Caco-2 (cell line): ENCODE measurements at regions of chr13 and their contacts with region 1.

Region 1: DNA sequence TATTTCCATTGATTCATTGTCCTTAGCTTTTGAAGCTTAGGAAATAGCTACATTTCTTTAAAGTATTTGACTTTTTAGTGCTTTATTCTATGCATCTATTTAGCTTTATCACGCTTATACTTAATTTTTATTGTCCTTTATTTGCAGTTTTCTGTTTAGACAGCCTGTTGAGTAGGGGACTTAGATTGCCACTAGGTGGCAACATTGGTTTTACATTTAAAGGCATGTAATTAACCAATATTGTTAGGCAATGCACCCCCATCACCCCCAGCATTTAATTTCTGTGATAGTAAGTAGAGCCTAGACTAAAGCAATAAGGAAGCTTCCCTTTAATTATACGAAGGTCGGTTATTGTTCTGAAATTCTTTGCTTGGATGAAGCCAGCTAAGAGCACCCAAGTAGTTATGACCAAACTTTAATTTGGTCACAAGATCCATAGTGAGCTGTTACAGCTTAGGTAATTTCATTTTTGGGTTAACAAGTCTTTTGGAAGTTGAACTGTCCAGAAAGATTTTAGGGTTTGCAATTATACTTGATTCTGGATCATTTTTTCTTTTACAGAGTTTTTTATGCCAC is 36.5 kb downstream of the B3GLCT start:
- DNase-seq: peak in 1 of 2 experiments; percentile 39
- H3K4me3 ChIP-seq: no peak overlapping the region
- H3K4me3 Mint-ChIP-seq: no peak overlapping the region
- H3K27ac Mint-ChIP-seq: no peak overlapping the region
- H3K4me1 ChIP-seq: no peaks in the 10 kb centered on the region
- H3K4me1 Mint-ChIP-seq: no peaks in the 10 kb centered on the region
- H3K27me3 ChIP-seq: no peaks in the 10 kb centered on the region
- H3K27me3 Mint-ChIP-seq: no peaks in the 10 kb centered on the region
- CTCF ChIP-seq: peak; percentile 74 to 82

Region 2: DNA sequence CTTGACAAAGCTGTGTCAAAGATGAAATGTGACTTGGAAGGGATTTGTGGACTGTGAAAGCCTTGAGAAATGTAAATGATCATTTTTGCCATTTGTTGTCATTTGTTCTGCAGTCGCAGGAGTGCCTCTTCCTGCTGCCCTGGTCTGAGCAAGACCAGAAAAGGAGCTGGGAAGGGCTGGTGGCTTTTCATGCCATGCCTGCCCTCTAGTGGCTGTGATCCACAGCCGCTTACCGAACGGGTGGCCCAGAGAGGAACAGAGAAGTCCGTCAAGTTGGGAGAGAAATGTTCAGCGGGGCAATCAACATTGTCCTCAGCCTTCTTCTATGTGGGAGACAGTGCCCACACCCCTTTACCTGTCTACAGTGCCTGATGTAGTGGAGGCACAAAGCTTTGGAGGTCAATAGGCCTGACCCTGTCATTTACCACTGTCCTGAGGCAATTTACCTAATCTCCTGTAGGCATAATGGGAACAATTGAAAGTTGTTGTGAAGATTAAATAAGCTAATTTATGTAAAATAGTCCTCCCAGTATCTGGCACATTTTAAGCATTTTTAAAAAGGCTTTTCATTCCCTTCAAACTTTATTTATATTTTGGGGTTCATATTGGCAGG is 187.9 kb after region 1 on chr13:
- CTCF ChIA-PET with region 1: interaction called, 24 read pairs
- POLR2A ChIA-PET with region 1: no interaction called
- intact Hi-C with region 1: loop called (anchors 1 kb)
- DNase-seq: peak; percentile 82 to 83
- H3K4me3 ChIP-seq: no peak overlapping the region
- H3K4me3 Mint-ChIP-seq: no peak overlapping the region
- H3K27ac Mint-ChIP-seq: no peak overlapping the region
- H3K4me1 ChIP-seq: no peaks in the 10 kb centered on the region
- H3K4me1 Mint-ChIP-seq: no peaks in the 10 kb centered on the region
- H3K27me3 ChIP-seq: no peaks in the 10 kb centered on the region
- H3K27me3 Mint-ChIP-seq: peaks cover 10% of the 10 kb centered on the region
- CTCF ChIP-seq: peak; percentile 94 to 97